Right ventricle myocardium inferior (tissue), 1 donor: ENCODE measurements at regions of chrX and their contacts with region 1.

Region 1: DNA sequence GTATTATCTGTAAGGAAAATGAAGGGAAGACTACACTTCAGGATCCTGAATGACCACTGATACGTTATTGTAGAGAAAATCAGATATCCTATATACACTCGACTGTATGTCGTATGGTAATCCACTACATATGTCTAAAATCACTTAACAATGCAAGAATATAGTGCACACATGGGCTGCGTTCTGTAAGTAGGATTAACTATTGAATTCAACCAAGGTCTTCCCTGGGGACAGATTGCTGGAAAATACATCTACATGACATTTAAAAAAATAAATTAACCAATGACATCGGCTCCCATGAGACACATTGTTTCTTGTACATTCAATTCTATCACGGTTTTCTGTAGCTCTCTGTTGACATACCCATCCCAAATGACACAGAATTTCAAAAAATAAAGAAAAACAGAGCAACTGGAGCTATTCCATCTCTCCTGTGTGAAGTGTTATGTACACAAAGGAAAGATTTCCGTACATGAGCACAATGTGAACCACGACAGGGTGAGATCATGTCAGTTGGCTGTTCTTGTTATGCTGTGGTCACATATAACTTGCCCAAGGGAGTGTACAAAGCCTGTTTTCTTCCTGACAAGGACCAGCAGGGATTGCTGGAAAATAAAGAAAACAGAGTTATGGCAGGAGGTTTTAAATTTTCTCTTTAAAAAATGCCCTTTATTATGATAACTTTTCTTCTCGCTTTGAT is 6.1 kb downstream of the ENOX2 start:
- DNase-seq: no peak
- ATAC-seq: peak; percentile 77

Region 2: DNA sequence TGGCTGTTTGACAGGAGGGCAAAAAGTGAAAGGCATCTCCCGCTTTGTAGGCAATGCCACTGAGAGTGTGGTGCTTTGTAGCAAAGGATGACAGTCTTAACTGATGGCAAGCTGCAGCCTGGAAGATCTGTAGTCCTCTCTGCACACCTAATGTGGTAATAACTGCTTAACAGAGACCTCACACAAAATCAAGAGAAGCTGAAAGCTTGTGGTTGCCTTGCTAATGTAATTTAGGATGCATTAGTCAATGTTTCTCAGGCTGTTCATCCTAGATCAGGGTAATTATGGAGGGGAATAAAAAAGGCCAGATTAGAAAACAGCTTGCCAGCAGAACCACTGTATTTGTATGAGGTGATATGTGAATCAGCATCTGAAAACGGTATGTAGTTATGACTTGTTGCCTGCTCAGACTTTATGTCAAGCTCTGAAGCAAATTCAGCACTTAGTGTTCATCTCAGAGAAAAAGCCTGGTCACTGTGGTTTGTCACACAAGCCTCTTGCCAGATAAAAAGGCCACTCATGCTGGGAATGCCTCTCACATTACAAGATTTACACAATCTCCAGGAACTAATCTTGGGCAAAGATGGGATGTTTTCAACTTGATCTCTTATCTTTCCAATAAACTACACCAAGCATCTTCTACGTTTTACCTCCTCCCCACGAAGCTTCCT is 124.7 kb before region 1 on chrX:
- intact Hi-C with region 1: loop called (anchors 10 kb)
- DNase-seq: no peak
- ATAC-seq: no peak